ENCODE measurements at regions of chr19 and their contacts with region 1.

Region 1: GRCh38 chr19:41263850-41264580 is at the start of gene HNRNPUL1:
- DNase-seq: peak; percentile 99
- ATAC-seq: peak; percentile 86 to 91 (median 87)
- H3K4me3 ChIP-seq: peak within 1 kb of the TSS; percentile 71 to 99 (median 92)
- H3K27ac ChIP-seq: peak within 1 kb of the TSS; percentile 91 to 100 (median 99)
- H3K4me1 ChIP-seq: peaks cover 3 to 36% (median 29%) of the 10 kb centered on the region in 12 donors
- H3K27me3 ChIP-seq: no peaks in the 10 kb centered on the region
- CTCF ChIP-seq: peak in 7 of 12 donors; percentile 10 to 49 (median 30)
- POLR2A ChIP-seq: peak in 1 of 2 donors; percentile 35
- total RNA-seq, gene HNRNPUL1: 88.7 to 138 (median 115) TPM

Region 2: DNA sequence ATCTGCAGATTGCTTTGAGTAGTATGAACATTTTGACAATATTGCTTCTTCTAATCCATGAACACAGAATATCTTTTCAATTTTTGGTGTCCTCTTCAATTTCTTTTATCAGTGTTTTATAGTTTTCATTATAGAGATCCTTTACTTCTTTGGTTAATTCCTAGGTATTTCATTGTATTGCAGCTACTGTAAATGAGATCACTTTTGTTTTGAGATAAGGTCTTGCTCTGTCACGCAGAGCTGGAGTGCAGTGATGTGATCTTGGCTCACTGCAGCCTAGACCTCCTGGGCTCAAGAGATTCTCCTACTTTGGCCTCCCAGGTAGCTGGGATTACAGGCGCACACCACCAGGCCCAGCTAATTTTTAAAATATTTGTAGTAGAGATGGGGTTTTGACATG is 391.8 kb before region 1 on chr19:
- intact Hi-C with region 1: no loop called
- DNase-seq: no peak
- ATAC-seq: no peak
- H3K4me3 ChIP-seq: no peak overlapping the region
- H3K27ac ChIP-seq: no peak overlapping the region
- H3K4me1 ChIP-seq: no peaks in the 10 kb centered on the region
- H3K27me3 ChIP-seq: peaks cover 0 to 13% (median 0%) of the 10 kb centered on the region in 9 donors
- CTCF ChIP-seq: no peak
- POLR2A ChIP-seq: no peak

Region 3: DNA sequence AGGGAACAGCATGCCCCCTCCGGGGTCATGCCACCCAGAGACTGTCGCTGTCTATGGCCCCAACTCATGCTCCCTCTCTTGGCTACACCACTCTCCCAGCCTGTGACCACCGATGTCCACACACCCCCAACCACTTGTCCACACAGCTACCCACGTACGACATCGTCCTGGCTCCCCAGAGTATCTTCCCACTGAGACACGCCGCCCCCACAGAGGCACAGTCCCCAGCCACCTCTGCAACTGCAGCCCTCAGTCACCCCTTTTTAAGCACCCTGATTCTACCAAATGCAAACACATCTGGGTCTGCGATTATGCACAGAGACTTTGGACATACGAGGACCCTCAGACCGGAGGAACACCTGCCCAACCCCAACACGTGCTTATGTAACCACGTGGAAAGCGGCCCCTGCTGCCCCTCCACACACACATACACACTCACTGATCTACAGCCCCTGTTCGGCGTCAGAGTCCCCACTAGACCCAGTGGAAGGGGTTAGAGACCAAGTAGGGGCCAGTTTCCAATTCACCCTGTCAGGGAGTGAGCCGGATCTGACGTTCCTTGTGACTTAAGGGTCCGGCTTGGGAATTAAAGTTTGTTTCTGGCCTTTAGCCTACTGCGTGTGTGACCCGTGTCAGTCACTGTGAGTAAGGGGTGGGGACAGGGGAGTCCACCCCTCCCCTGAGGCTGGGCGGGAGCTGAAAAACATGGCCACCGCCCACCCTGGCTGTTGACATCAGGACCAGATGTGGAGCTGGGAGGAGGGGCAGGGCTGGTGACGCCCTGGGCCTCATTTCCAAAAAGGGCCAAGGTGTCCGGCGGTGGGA is 56.9 kb before region 1 on chr19:
- intact Hi-C with region 1: loop called (anchors 1 to 2 kb)
- DNase-seq: peak; percentile 82 to 95 (median 85)
- ATAC-seq: peak; percentile 75 to 89 (median 82)
- H3K4me3 ChIP-seq: peak overlapping the region in 6 of 12 donors; percentile 10 to 36 (median 17)
- H3K27ac ChIP-seq: peak overlapping the region in 11 of 12 donors; percentile 32 to 74 (median 69)
- H3K4me1 ChIP-seq: peaks cover 0 to 9% (median 0%) of the 10 kb centered on the region in 12 donors
- H3K27me3 ChIP-seq: no peaks in the 10 kb centered on the region
- CTCF ChIP-seq: no peak
- POLR2A ChIP-seq: no peak

Region 4: DNA sequence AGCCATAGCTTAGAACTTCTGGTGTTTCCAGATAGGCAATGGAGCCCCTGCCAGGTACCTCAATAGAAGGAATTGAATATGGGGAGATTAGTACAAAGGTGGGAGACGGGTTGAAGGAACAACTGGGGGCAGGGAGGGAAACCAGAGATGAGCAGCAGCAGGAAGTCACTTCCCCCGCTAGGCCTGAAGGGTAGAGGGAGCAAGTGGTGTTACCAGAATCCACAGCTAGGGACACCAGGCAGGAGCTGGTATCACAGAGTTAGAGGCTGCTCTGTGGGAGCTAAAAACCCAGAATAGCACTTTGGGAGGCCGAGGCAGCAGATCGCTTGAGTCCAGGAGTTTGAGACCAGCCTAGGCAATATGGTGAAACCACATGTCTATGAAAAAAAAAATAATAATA is 15.1 kb before region 1 on chr19:
- intact Hi-C with region 1: no loop called
- DNase-seq: no peak
- ATAC-seq: no peak
- H3K4me3 ChIP-seq: no peak overlapping the region
- H3K27ac ChIP-seq: no peak overlapping the region
- H3K4me1 ChIP-seq: peaks cover 0 to 6% (median 0%) of the 10 kb centered on the region in 12 donors
- H3K27me3 ChIP-seq: no peaks in the 10 kb centered on the region
- CTCF ChIP-seq: no peak
- POLR2A ChIP-seq: no peak

Region 5: DNA sequence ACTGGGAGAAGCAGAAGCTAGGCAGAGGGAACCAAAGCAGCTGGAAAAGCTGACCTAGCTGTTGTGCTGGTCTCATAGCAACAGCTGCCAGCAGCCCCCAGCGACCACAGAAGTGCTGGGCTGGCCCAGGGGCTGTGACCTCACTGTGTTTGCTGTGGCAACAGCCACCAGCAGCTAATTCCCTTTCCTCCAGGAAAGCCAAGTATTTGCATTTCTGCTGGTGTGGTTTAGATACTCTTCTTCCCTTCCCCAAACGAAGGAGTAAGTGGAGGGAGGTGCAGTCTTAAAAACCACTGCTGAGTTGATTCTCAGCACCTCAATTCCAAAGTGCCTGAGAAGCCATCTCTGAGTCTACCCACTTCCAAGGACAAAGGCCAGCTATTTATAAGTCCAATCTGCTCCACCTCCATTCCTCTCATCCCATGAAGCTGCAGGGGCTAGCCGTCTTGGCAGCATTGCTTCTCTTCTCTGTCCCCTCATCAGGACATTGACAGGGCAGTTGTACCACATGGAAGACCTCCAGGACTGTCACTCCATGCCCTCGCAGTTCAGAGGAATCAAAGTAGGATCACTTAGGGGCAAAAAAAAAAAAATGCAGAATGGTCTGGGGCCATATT is 34.4 kb after region 1 on chr19:
- intact Hi-C with region 1: loop called in 5 of 10 experiments (anchors 1 to 2 kb)
- DNase-seq: peak; percentile 85 to 91 (median 91)
- ATAC-seq: peak; percentile 74 to 87 (median 82)
- H3K4me3 ChIP-seq: peak overlapping the region in 1 of 12 donors; percentile 10
- H3K27ac ChIP-seq: peak overlapping the region; percentile 78 to 96 (median 88)
- H3K4me1 ChIP-seq: peaks cover 6 to 75% (median 48%) of the 10 kb centered on the region in 12 donors
- H3K27me3 ChIP-seq: no peaks in the 10 kb centered on the region
- CTCF ChIP-seq: no peak
- POLR2A ChIP-seq: peak in 1 of 2 donors; percentile 31

Region 6: DNA sequence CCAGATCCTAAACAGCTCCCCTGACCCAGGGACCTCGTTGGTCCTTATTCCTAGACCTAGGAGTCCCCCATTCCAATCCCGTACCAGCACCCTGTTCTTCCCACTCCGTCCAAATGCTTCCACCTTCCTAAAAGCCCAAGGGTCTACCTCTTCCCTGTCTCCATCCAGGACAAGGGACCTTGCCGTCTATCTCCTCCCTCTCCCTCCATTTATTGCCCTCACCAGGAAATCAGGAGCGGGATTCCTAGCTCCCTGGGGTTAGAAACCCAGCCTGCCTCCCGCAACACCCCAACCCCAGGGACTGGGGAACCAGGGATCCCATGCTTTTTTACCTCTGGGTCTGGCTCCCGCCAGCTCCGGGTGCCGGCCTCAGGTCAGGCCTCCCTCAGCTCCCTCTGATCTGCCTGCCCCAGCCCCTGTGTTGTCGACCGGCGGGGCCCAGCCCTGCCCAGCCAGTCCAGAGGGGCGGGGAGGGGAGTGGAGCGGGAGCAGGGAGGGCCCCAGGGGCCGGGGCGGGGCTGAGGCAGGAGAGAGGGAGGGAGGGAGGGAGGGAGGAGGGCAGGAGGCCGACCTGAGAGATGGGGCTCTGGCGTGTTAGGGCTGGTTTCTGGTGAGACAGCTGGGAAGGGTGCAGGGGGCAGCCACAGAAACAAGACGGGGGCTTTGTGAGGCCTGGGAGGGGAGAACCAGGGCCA is 163.1 kb after region 1 on chr19 and contains the start of gene B3GNT8:
- intact Hi-C with region 1: loop called in 1 of 10 experiments (anchors 5 kb)
- DNase-seq: peak; percentile 89 to 93 (median 92)
- ATAC-seq: peak; percentile 70 to 87 (median 85)
- H3K4me3 ChIP-seq: peak within 1 kb of the TSS; percentile 16 to 84 (median 62)
- H3K27ac ChIP-seq: peak within 1 kb of the TSS; percentile 54 to 95 (median 92)
- H3K4me1 ChIP-seq: peaks cover 7 to 82% (median 52%) of the 10 kb centered on the region in 12 donors
- H3K27me3 ChIP-seq: no peaks in the 10 kb centered on the region
- CTCF ChIP-seq: no peak
- POLR2A ChIP-seq: peak; percentile 30 to 84
- total RNA-seq, gene B3GNT8: 6.4 to 11.5 (median 9.4) TPM